Transverse colon (tissue), 4 donors: ENCODE measurements at regions of chr9 and their contacts with region 1.

Region 1: DNA sequence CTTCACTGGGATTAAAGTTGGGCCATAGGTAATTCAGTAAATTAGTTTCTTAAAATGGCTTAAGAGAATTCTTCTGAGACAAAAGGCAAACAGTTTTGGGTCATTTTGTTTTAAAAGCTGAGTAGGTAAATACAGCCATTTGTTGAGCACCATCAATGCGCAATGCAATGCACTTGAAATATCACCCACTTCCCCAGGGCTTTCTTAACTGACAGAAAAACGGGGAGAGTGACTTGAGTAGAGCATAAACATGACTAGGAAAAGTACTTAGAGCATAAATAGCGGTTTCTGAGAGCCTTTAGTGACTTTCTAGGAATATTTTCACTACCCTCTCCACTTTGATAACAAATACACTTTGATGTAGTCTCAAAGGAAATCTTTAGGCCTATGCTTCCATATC is 27.2 kb downstream of the MLANA start:
- DNase-seq: no peak
- H3K4me3 ChIP-seq: no peak overlapping the region
- H3K27ac ChIP-seq: no peak overlapping the region
- H3K4me1 ChIP-seq: no peaks in the 10 kb centered on the region
- H3K27me3 ChIP-seq: no peaks in the 10 kb centered on the region
- CTCF ChIP-seq: no peak
- EP300 ChIP-seq: no peak
- POLR2A ChIP-seq: no peak

Region 2: GRCh38 chr9:6106576-6107339 is 188.9 kb after region 1 on chr9:
- in situ Hi-C with region 1: no loop called
- intact Hi-C with region 1: loop called (anchors 2 kb)
- DNase-seq: no peak
- H3K4me3 ChIP-seq: no peak overlapping the region
- H3K27ac ChIP-seq: no peak overlapping the region
- H3K4me1 ChIP-seq: peaks cover 0 to 5% (median 0%) of the 10 kb centered on the region in 4 donors
- H3K27me3 ChIP-seq: no peaks in the 10 kb centered on the region
- CTCF ChIP-seq: peak in 2 of 5 experiments; percentile 9 to 10
- EP300 ChIP-seq: no peak
- POLR2A ChIP-seq: no peak

Region 3: GRCh38 chr9:7165349-7165975 is 1247.6 kb after region 1 on chr9:
- in situ Hi-C with region 1: no loop called
- intact Hi-C with region 1: no loop called
- DNase-seq: no peak
- H3K4me3 ChIP-seq: no peak overlapping the region
- H3K27ac ChIP-seq: peak overlapping the region; percentile 6 to 65 (median 54)
- H3K4me1 ChIP-seq: peaks cover 0 to 16% (median 0%) of the 10 kb centered on the region in 4 donors
- H3K27me3 ChIP-seq: no peaks in the 10 kb centered on the region
- CTCF ChIP-seq: no peak
- EP300 ChIP-seq: no peak
- POLR2A ChIP-seq: no peak